Activated B cell treated with CpG ODN at 0.5 μM for 24 hours (primary cell): ENCODE measurements at regions of chr1 and their contacts with region 1.

Region 1: GRCh38 chr1:180003026-180003695 is 48.6 kb downstream of the CEP350 start:
- DNase-seq: no peak
- ATAC-seq: peak; percentile 61
- H3K4me3 Mint-ChIP-seq: no peak overlapping the region
- H3K27ac Mint-ChIP-seq: peak overlapping the region; percentile 47
- H3K4me1 Mint-ChIP-seq: peaks cover 20% of the 10 kb centered on the region
- H3K27me3 Mint-ChIP-seq: no peaks in the 10 kb centered on the region
- CTCF ChIP-seq: no peak

Region 2: GRCh38 chr1:179882243-179883039 is 120.7 kb before region 1 on chr1 and contains the start of gene TOR1AIP1:
- CTCF ChIA-PET with region 1: no interaction called
- POLR2A ChIA-PET with region 1: interaction called, 8 read pairs
- intact Hi-C with region 1: loop called (anchors 5 kb)
- DNase-seq: peak; percentile 96
- ATAC-seq: peak; percentile 76
- H3K4me3 Mint-ChIP-seq: peak within 1 kb of the TSS; percentile 100
- H3K27ac Mint-ChIP-seq: peak within 1 kb of the TSS; percentile 100
- H3K4me1 Mint-ChIP-seq: peaks cover 64% of the 10 kb centered on the region
- H3K27me3 Mint-ChIP-seq: no peaks in the 10 kb centered on the region
- CTCF ChIP-seq: no peak
- total RNA-seq, gene TOR1AIP1: 42.3 and 46.6 TPM in 2 replicates

Region 3: DNA sequence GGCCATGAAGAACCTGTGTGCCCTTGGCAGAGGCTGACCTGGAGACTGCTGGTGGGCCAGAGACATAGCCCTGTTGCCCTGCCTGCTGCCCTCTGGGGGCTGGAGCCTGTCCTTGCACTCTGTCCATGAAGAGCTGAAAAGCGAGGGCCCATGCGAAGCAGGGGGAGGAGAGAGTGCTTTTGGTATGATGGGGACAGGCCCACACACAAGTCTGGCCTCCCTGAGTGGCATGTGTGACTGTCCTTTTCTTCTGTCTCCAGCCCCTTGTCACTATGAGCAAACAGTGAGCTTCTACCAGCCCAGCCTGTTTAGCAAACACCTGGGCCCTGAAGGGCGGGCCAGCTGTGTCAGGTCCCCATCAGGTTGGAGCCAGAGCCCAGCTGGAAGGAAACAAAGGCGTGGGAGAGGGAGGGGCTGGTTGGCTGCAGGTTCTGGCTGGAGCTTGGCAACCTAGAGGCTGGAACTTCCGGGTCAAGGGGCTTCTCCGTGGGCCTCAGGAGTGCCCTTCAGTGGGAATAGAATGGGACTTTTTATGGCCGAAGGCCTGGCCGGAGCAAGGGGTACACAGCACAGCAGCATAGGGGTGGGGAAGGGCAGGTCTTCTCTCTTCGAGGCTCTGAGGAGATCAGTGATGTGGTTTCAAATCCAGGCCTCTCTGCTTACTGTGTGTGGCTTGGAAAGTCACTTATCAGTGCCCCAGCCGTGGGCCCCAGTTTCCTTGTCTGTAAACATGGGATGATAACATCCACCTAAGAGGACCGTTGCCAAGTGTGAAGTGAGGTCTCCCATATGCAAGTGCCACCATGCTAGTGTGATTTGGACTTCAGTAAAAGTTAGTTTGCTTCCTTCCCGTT is 165.9 kb after region 1 on chr1:
- CTCF ChIA-PET with region 1: no interaction called
- POLR2A ChIA-PET with region 1: no interaction called
- intact Hi-C with region 1: no loop called
- DNase-seq: no peak
- ATAC-seq: peak; percentile 68
- H3K4me3 Mint-ChIP-seq: no peak overlapping the region
- H3K27ac Mint-ChIP-seq: no peak overlapping the region
- H3K4me1 Mint-ChIP-seq: no peaks in the 10 kb centered on the region
- H3K27me3 Mint-ChIP-seq: no peaks in the 10 kb centered on the region
- CTCF ChIP-seq: no peak